CD8-positive, alpha-beta T cell (primary cell): ENCODE measurements at regions of chr10 and their contacts with region 1.

Region 1: DNA sequence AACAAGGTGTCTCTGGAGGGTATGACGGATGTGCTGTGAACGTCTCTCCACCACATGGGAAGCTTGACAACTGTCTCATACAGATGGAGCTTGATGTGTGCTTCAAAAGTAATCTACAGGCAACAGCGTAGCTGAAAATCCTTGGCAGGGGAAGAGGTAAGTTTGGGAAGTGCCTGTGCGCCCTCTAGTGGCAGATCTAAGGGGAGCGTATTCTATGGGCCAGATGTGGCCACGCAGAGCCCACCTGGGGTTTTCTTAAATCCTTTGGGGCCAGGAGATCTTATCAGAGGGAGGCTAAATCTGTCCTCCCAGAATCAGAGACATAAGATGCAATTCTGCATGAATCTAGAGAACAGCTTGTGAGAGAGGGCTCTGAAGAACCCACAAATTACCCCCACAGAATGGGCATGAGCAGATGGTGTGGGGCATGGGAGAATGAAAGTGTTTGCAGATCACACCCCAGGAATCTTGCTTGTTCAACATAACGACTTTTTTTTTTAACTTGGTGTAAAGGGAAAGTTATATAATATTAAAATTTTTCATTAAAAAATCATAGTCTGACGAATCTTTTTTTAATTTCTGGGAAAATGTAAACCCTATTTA is 91.2 kb upstream of the MPP7 start:
- DNase-seq: peak; percentile 26 to 79 (median 63)
- ATAC-seq: peak; percentile 74
- H3K4me3 ChIP-seq: no peak overlapping the region
- H3K4me3 Mint-ChIP-seq: no peak overlapping the region
- H3K27ac ChIP-seq: no peak overlapping the region
- H3K27ac Mint-ChIP-seq: no peak overlapping the region
- H3K4me1 ChIP-seq: no peaks in the 10 kb centered on the region
- H3K4me1 Mint-ChIP-seq: peaks cover 4% of the 10 kb centered on the region
- H3K27me3 ChIP-seq: no peaks in the 10 kb centered on the region
- H3K27me3 Mint-ChIP-seq: peaks cover 15% of the 10 kb centered on the region
- CTCF ChIP-seq: peak; percentile 99

Region 2: DNA sequence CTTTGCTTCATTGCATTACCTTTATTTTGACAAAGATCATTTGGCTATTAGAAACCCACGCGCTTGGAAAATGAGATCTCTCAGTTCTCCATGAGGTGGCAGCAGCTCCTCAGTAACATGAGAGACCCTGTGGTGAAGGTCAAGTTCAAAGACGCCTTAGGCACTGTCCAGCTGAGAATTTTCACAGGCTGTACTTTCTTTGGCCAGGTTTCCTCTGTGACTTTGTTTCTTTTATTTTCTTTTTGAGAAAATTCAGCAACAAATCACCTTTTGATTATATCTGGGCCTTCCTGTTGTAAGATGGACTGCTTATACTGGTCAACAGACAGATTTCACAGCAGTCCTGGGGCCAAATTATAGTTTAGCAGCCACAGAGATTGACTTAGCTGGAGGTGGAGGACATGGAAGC is 835.5 kb before region 1 on chr10:
- CTCF ChIA-PET with region 1: no interaction called
- POLR2A ChIA-PET with region 1: no interaction called
- intact Hi-C with region 1: loop called in 1 of 2 experiments (anchors 5 kb)
- DNase-seq: peak in 6 of 9 experiments; percentile 17 to 63 (median 35)
- ATAC-seq: no peak
- H3K4me3 ChIP-seq: no peak overlapping the region
- H3K4me3 Mint-ChIP-seq: no peak overlapping the region
- H3K27ac ChIP-seq: no peak overlapping the region
- H3K27ac Mint-ChIP-seq: no peak overlapping the region
- H3K4me1 ChIP-seq: no peaks in the 10 kb centered on the region
- H3K4me1 Mint-ChIP-seq: peaks cover 6% of the 10 kb centered on the region
- H3K27me3 ChIP-seq: no peaks in the 10 kb centered on the region
- H3K27me3 Mint-ChIP-seq: no peaks in the 10 kb centered on the region
- CTCF ChIP-seq: peak; percentile 61

Region 3: GRCh38 chr10:27742195-27743011 is 651.7 kb before region 1 on chr10:
- CTCF ChIA-PET with region 1: interaction called, 19 read pairs
- POLR2A ChIA-PET with region 1: no interaction called
- intact Hi-C with region 1: loop called in 1 of 2 experiments (anchors 1 kb)
- DNase-seq: peak; percentile 55 to 85 (median 78)
- ATAC-seq: peak; percentile 82
- H3K4me3 ChIP-seq: peak overlapping the region; percentile 42 to 80
- H3K4me3 Mint-ChIP-seq: peak overlapping the region; percentile 87
- H3K27ac ChIP-seq: no peak overlapping the region
- H3K27ac Mint-ChIP-seq: no peak overlapping the region
- H3K4me1 ChIP-seq: peaks cover 57% of the 10 kb centered on the region
- H3K4me1 Mint-ChIP-seq: peaks cover 43% of the 10 kb centered on the region
- H3K27me3 ChIP-seq: peaks cover 53 to 65% of the 10 kb centered on the region in 2 experiments
- H3K27me3 Mint-ChIP-seq: peaks cover 57% of the 10 kb centered on the region
- CTCF ChIP-seq: peak; percentile 78

Region 4: DNA sequence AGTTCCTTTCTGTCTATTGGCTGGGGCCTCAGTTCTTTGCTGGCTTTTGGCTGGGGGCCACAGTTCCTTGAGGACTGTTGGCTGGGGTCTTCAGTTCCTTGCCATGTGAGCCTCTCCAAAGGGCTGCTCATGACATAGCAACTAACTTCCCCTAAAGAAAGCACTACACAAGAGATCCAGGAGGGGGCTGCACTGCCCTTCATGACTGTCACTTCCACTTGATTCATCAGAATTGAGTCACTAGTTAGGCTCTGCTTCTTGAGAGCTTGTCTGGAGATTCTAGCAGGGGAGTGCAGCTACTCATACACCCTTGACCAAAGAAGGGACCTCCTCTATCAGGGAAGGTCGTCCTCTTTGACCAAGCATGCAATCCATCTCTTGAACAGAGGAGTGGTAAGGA is 610.4 kb before region 1 on chr10:
- CTCF ChIA-PET with region 1: interaction called, 5 read pairs
- POLR2A ChIA-PET with region 1: no interaction called
- intact Hi-C with region 1: loop called in 1 of 2 experiments (anchors 2 kb)
- DNase-seq: peak in 6 of 9 experiments; percentile 2 to 53 (median 30)
- ATAC-seq: peak; percentile 71
- H3K4me3 ChIP-seq: no peak overlapping the region
- H3K4me3 Mint-ChIP-seq: no peak overlapping the region
- H3K27ac ChIP-seq: no peak overlapping the region
- H3K27ac Mint-ChIP-seq: no peak overlapping the region
- H3K4me1 ChIP-seq: no peaks in the 10 kb centered on the region
- H3K4me1 Mint-ChIP-seq: no peaks in the 10 kb centered on the region
- H3K27me3 ChIP-seq: no peaks in the 10 kb centered on the region
- H3K27me3 Mint-ChIP-seq: peaks cover 14% of the 10 kb centered on the region
- CTCF ChIP-seq: peak; percentile 30

Region 5: DNA sequence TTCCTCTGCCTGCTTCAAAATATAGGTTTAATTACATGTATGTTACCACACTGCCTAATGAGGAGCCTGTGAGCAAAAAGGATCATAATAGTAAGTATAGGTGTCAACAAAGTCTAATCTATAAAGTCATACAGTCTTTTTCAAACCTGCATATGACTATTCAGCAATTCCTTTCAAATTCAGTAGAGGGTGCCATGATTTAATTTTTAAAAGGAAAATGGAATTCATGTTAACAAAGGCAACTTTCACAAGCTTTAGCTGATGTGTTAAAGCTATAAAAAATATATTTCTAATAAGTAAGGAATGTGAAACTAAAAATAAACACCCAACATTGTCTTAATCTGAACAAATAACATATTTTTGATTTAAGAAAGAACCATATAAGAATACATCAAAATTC is 143.3 kb before region 1 on chr10:
- CTCF ChIA-PET with region 1: interaction called, 25 read pairs
- POLR2A ChIA-PET with region 1: interaction called, 3 read pairs
- intact Hi-C with region 1: loop called in 1 of 2 experiments (anchors 1 kb)
- DNase-seq: peak in 2 of 9 experiments; percentile 33 to 50
- ATAC-seq: peak; percentile 42
- H3K4me3 ChIP-seq: no peak overlapping the region
- H3K4me3 Mint-ChIP-seq: no peak overlapping the region
- H3K27ac ChIP-seq: no peak overlapping the region
- H3K27ac Mint-ChIP-seq: no peak overlapping the region
- H3K4me1 ChIP-seq: no peaks in the 10 kb centered on the region
- H3K4me1 Mint-ChIP-seq: peaks cover 41% of the 10 kb centered on the region
- H3K27me3 ChIP-seq: no peaks in the 10 kb centered on the region
- H3K27me3 Mint-ChIP-seq: no peaks in the 10 kb centered on the region
- CTCF ChIP-seq: peak; percentile 60

Region 6: DNA sequence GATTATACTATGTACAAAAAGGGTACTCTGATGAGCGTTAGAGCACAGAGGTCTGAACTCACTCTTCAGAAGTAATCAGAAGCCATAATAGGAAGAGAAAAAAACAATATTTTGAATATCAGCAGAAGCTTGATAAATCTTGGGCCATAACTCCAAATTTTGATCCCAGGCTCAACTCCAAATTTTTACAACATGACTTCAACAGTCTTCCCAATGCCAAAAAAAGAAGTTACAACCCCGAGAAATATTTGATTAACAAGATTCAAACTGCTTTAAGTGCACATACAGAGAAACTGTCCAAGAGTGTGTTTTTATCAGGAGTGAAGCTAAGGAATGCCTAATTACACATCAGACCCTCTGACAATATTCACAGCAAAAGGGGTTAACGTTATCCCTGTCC is 98.7 kb before region 1 on chr10:
- CTCF ChIA-PET with region 1: interaction called, 16 read pairs
- POLR2A ChIA-PET with region 1: interaction called, 4 read pairs
- intact Hi-C with region 1: no loop called
- DNase-seq: no peak
- ATAC-seq: no peak
- H3K4me3 ChIP-seq: no peak overlapping the region
- H3K4me3 Mint-ChIP-seq: no peak overlapping the region
- H3K27ac ChIP-seq: no peak overlapping the region
- H3K27ac Mint-ChIP-seq: peak overlapping the region; percentile 46
- H3K4me1 ChIP-seq: peaks cover 47% of the 10 kb centered on the region
- H3K4me1 Mint-ChIP-seq: peaks cover 80% of the 10 kb centered on the region
- H3K27me3 ChIP-seq: no peaks in the 10 kb centered on the region
- H3K27me3 Mint-ChIP-seq: no peaks in the 10 kb centered on the region
- CTCF ChIP-seq: no peak

Region 7: GRCh38 chr10:28479425-28479865 is 85.4 kb after region 1 on chr10:
- CTCF ChIA-PET with region 1: no interaction called
- POLR2A ChIA-PET with region 1: no interaction called
- intact Hi-C with region 1: no loop called
- DNase-seq: peak in 1 of 9 experiments; percentile 29
- ATAC-seq: no peak
- H3K4me3 ChIP-seq: no peak overlapping the region
- H3K4me3 Mint-ChIP-seq: no peak overlapping the region
- H3K27ac ChIP-seq: no peak overlapping the region
- H3K27ac Mint-ChIP-seq: no peak overlapping the region
- H3K4me1 ChIP-seq: no peaks in the 10 kb centered on the region
- H3K4me1 Mint-ChIP-seq: no peaks in the 10 kb centered on the region
- H3K27me3 ChIP-seq: no peaks in the 10 kb centered on the region
- H3K27me3 Mint-ChIP-seq: peaks cover 17% of the 10 kb centered on the region
- CTCF ChIP-seq: no peak